ENCODE measurements at regions of chr18 and their contacts with region 1.

Region 1: DNA sequence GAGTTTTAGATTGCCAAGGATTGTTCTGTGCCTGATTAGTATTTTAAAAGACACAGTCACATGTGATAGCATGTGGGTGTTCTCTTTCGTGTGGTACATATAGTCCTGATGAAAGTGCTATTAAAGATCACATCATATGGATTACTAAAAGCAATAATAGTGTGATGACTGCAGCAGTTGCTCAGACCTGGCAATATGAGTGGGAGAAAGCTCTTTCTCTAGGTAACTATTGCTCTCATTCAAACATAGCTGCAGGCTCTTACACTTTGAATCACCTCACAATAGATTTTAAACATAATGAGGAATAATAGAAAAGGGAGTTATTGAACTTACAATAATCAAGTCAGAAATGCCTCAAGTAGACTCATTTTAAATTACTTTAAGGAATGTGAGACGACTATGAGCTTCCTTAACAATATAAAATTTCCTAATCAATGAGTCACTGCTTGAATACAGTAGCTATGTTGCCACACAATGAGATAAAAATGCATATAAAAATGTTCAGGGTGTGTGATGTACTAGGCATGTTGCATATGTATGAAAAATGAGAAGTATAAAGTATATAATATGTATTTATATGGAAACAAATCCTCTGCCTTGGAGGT is 452.1 kb downstream of the TMX3 start:
- DNase-seq: no peak
- H3K4me3 ChIP-seq: no peak overlapping the region
- H3K27ac ChIP-seq: no peak overlapping the region
- H3K4me1 ChIP-seq: no peaks in the 10 kb centered on the region
- H3K27me3 ChIP-seq: no peaks in the 10 kb centered on the region
- CTCF ChIP-seq: no peak
- EP300 ChIP-seq: no peak
- POLR2A ChIP-seq: no peak

Region 2: DNA sequence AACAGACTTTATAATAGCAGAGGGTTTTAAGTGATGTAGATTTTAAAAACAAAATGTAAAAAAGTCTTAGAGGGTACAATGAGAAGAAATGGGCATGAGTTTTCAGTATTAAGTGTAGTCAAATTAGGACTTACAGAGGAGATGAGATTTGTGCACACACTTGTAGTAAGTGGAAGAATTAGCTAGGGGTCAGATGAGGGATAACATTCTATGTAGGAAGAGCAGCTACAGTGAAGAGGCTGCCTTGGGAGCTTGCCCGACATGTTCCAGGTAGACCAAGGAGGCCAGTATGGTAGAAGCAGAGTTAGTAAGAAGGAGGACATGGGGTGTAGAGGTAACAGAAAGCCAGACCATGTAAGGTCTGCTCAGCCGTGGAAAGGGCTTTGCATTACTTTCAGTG is 557.0 kb before region 1 on chr18:
- in situ Hi-C with region 1: no loop called
- intact Hi-C with region 1: loop called (anchors 5 kb)
- DNase-seq: no peak
- H3K4me3 ChIP-seq: no peak overlapping the region
- H3K27ac ChIP-seq: no peak overlapping the region
- H3K4me1 ChIP-seq: no peaks in the 10 kb centered on the region
- H3K27me3 ChIP-seq: no peaks in the 10 kb centered on the region
- CTCF ChIP-seq: no peak
- EP300 ChIP-seq: no peak
- POLR2A ChIP-seq: no peak

Region 3: GRCh38 chr18:68484241-68484640 is 221.4 kb after region 1 on chr18:
- in situ Hi-C with region 1: no loop called
- intact Hi-C with region 1: no loop called
- DNase-seq: no peak
- H3K4me3 ChIP-seq: no peak overlapping the region
- H3K27ac ChIP-seq: no peak overlapping the region
- H3K4me1 ChIP-seq: no peaks in the 10 kb centered on the region
- H3K27me3 ChIP-seq: no peaks in the 10 kb centered on the region
- CTCF ChIP-seq: no peak
- EP300 ChIP-seq: no peak
- POLR2A ChIP-seq: no peak